GM10248 (cell line): ENCODE measurements at regions of chr2 and their contacts with region 1.

Region 1: DNA sequence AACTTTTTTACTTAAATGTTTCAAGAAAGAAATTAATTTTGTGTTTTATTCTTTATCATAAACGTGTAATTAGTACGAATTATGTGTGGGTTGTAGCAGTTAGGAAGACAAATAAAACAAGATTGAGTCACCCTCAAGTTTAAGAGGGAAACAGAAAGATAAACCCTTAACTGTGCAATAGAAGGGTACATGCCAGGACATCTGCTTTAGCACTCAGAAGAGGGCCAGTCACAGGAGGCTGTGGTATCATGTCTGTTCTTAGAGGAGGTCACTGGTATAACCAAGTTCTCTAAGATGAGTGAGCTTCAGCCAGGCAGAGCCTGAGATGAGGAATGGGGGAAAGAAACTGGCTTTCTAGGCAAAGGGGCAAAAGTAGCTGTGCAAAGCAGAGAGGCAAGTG is 42.4 kb upstream of the GRHL1 start:
- DNase-seq: no peak
- CTCF ChIP-seq: no peak

Region 2: GRCh38 chr2:9778012-9778411 is 131.1 kb before region 1 on chr2:
- CTCF ChIA-PET with region 1: no interaction called
- POLR2A ChIA-PET with region 1: no interaction called
- DNase-seq: no peak
- CTCF ChIP-seq: peak; percentile 26

Region 3: GRCh38 chr2:9895669-9896595 is 13.2 kb before region 1 on chr2:
- CTCF ChIA-PET with region 1: interaction called, 10 read pairs
- POLR2A ChIA-PET with region 1: no interaction called
- DNase-seq: no peak
- CTCF ChIP-seq: no peak